ENCODE measurements at regions of chr6 and their contacts with region 1.

Region 1: DNA sequence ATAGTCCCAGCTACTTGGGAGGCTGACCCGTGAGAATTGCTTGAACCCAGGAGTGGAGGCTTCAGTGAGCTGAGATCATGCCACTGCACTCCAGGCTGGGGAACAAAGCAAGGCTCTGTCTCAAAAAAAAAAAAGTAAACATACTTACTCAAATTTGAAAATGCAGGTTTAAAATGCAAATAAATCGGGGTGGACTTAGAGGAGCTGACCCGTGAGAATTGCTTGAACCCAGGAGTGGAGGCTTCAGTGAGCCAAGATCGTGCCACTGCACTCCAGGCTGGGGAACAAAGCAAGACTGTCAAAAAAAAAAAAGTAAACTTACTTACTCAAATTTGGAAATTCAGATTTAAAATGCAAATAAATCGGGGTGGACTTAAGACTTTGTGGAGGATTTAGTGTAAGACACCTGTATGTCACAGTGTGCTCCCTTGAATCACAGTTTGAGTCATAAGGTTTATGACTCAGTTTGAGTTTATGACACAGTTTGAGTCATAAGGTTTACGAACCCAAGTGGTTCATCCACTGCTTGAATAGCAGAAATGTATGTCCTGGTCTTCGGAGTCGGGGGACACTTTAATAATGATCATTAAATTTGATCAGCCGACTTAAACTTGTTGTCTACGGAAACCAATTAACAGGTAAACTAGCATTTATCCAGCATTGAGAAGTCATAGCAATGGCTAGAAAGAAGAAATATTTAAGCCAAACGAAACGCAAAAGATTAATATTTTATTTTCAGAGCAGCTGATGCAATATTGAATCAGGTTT is 6.7 kb upstream of the MRPS10 start:
- DNase-seq: no peak
- H3K4me3 Mint-ChIP-seq: peak overlapping the region; percentile 61
- H3K27ac Mint-ChIP-seq: peak overlapping the region; percentile 85
- H3K4me1 Mint-ChIP-seq: peaks cover 18% of the 10 kb centered on the region
- H3K27me3 Mint-ChIP-seq: no peaks in the 10 kb centered on the region

Region 2: DNA sequence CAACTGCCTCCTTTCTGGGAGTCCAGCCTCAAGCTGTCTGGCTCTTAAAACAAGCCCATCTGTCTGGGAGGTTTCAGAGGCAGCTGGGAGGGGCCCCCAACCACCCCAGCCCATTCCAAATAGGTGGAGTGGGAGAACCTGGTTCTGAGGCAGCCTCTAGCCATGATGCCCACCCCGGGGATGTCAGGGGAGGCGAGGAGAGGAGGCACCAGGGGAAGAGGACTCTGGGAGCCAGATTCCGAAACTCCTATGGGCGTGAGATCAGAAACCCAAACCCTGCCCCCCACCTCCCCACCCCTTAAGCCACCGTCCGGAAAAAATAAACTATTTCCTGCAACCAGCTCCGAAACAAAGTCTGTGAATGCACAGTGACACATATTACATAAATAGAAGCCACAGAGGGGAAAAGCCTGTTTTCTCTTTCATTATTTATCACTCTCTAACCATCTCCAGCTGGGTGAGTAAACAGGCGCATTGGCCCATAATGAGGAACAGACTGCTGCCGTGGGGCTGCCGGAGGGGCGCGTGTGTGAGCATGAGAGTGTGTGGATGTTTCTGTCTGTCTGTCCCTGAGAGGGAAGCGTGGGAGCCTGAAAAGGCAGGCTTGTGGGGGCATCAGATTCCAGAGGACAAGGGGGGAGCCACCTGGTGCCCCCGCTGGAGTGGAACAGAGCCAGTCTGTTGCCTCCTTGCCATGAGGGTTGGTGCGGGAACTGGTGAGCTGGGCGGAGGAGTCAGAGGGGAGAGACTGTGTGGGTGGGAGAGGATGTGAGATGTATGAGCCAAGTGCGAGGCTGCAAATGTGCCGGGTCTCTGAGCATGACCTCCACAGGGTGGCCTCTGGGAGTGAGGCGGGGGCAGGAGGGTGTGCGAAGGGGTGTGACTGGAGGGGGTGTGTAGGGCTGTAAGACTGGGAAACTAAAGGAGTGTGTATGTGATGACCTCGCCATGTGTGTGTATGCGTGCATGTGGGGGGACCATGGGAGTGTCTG is 692.5 kb before region 1 on chr6:
- intact Hi-C with region 1: loop called (anchors 5 kb)
- DNase-seq: peak; percentile 63
- H3K4me3 Mint-ChIP-seq: peak overlapping the region; percentile 76
- H3K27ac Mint-ChIP-seq: peak overlapping the region; percentile 92
- H3K4me1 Mint-ChIP-seq: peaks cover 50% of the 10 kb centered on the region
- H3K27me3 Mint-ChIP-seq: peaks cover 38% of the 10 kb centered on the region

Region 3: GRCh38 chr6:41947581-41948220 is 276.7 kb before region 1 on chr6:
- intact Hi-C with region 1: no loop called
- DNase-seq: no peak
- H3K4me3 Mint-ChIP-seq: no peak overlapping the region
- H3K27ac Mint-ChIP-seq: peak overlapping the region; percentile 13
- H3K4me1 Mint-ChIP-seq: peaks cover 11% of the 10 kb centered on the region
- H3K27me3 Mint-ChIP-seq: no peaks in the 10 kb centered on the region

Region 4: GRCh38 chr6:42175860-42176259 is 48.5 kb before region 1 on chr6:
- intact Hi-C with region 1: no loop called
- DNase-seq: no peak
- H3K4me3 Mint-ChIP-seq: no peak overlapping the region
- H3K27ac Mint-ChIP-seq: no peak overlapping the region
- H3K4me1 Mint-ChIP-seq: peaks cover 8% of the 10 kb centered on the region
- H3K27me3 Mint-ChIP-seq: peaks cover 3% of the 10 kb centered on the region

Region 5: GRCh38 chr6:42428326-42429041 is 204.1 kb after region 1 on chr6:
- intact Hi-C with region 1: loop called (anchors 10 kb)
- DNase-seq: no peak
- H3K4me3 Mint-ChIP-seq: no peak overlapping the region
- H3K27ac Mint-ChIP-seq: peak overlapping the region; percentile 28
- H3K4me1 Mint-ChIP-seq: peaks cover 60% of the 10 kb centered on the region
- H3K27me3 Mint-ChIP-seq: no peaks in the 10 kb centered on the region

Region 6: GRCh38 chr6:42520786-42521607 is 296.6 kb after region 1 on chr6:
- intact Hi-C with region 1: loop called (anchors 1 kb)
- DNase-seq: no peak
- H3K4me3 Mint-ChIP-seq: peak overlapping the region; percentile 9
- H3K27ac Mint-ChIP-seq: peak overlapping the region; percentile 89
- H3K4me1 Mint-ChIP-seq: peaks cover 16% of the 10 kb centered on the region
- H3K27me3 Mint-ChIP-seq: peaks cover 4% of the 10 kb centered on the region

Measured in activated T-helper 1 cell treated with anti-CD3 and anti-CD28 coated beads, Interleukin-12 subunit alpha, Interleukin-12 subunit beta, Interleukin-2, Interleukin-4 antibody, amounts not matched to agents 30 ng/mL and 10 ng/mL and 1 ng/mL, durations not matched to agents 14 hours and 24 hours and 36 hours (primary cell).